ENCODE measurements at regions of chr9 and their contacts with region 1.

Region 1: GRCh38 chr9:126398403-126399058 is 71.9 kb downstream of the MVB12B start:
- DNase-seq: peak; percentile 57 to 88 (median 77)
- ATAC-seq: no peak
- H3K4me3 ChIP-seq: peak overlapping the region in 1 of 2 experiments; percentile 29
- H3K4me3 Mint-ChIP-seq: peak overlapping the region; percentile 69
- H3K27ac ChIP-seq: peak overlapping the region; percentile 38 to 64
- H3K27ac Mint-ChIP-seq: peak overlapping the region; percentile 86
- H3K4me1 ChIP-seq: peaks cover 44% of the 10 kb centered on the region
- H3K4me1 Mint-ChIP-seq: peaks cover 54% of the 10 kb centered on the region
- H3K27me3 ChIP-seq: no peaks in the 10 kb centered on the region
- H3K27me3 Mint-ChIP-seq: no peaks in the 10 kb centered on the region
- CTCF ChIP-seq: peak; percentile 99

Region 2: GRCh38 chr9:125407974-125408900 is 990.3 kb before region 1 on chr9:
- CTCF ChIA-PET with region 1: no interaction called
- POLR2A ChIA-PET with region 1: no interaction called
- intact Hi-C with region 1: loop called (anchors 2 to 5 kb)
- DNase-seq: peak; percentile 60 to 86 (median 78)
- ATAC-seq: peak; percentile 82
- H3K4me3 ChIP-seq: peak overlapping the region; percentile 29 to 58
- H3K4me3 Mint-ChIP-seq: peak overlapping the region; percentile 70
- H3K27ac ChIP-seq: no peak overlapping the region
- H3K27ac Mint-ChIP-seq: no peak overlapping the region
- H3K4me1 ChIP-seq: peaks cover 6% of the 10 kb centered on the region
- H3K4me1 Mint-ChIP-seq: peaks cover 10% of the 10 kb centered on the region
- H3K27me3 ChIP-seq: peaks cover 8 to 20% of the 10 kb centered on the region in 2 experiments
- H3K27me3 Mint-ChIP-seq: peaks cover 27% of the 10 kb centered on the region
- CTCF ChIP-seq: peak; percentile 84

Region 3: DNA sequence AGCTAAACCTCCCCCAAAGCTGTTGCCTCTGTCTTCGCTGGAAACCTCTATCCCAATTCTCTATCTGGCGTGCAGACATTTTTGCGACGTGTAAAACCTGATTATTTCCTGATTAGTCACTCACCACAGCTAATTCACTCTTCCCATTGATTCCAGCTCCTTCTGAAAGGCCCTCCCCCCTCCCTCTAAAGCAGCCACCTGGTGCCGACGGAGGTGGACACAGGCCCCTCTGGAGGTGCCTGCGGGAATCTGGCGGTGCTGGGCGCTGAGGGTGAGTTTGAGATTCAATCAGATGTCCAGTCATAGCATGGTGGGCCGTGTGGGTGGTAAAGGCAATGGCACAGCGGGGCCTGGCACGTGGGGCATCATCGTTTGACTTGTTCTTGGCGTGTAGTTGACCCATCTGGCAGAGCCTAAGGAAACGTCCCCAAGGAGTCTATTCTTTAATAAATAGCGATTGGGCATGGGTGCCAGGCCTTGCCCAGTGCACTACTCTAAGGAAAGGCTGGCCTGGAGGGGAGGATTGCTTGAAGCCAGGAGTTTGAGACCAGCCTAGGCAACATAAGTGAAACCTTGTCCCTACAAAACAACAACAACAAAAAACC is 343.0 kb before region 1 on chr9:
- CTCF ChIA-PET with region 1: no interaction called
- POLR2A ChIA-PET with region 1: no interaction called
- intact Hi-C with region 1: no loop called
- DNase-seq: no peak
- ATAC-seq: no peak
- H3K4me3 ChIP-seq: no peak overlapping the region
- H3K4me3 Mint-ChIP-seq: no peak overlapping the region
- H3K27ac ChIP-seq: no peak overlapping the region
- H3K27ac Mint-ChIP-seq: no peak overlapping the region
- H3K4me1 ChIP-seq: no peaks in the 10 kb centered on the region
- H3K4me1 Mint-ChIP-seq: no peaks in the 10 kb centered on the region
- H3K27me3 ChIP-seq: no peaks in the 10 kb centered on the region
- H3K27me3 Mint-ChIP-seq: peaks cover 17% of the 10 kb centered on the region
- CTCF ChIP-seq: no peak

Region 4: GRCh38 chr9:126317513-126317912 is 81.0 kb before region 1 on chr9:
- CTCF ChIA-PET with region 1: interaction called, 182 read pairs
- POLR2A ChIA-PET with region 1: interaction called, 14 read pairs
- intact Hi-C with region 1: loop called (anchors 1 kb)
- DNase-seq: peak; percentile 30 to 78 (median 62)
- ATAC-seq: peak; percentile 92
- H3K4me3 ChIP-seq: no peak overlapping the region
- H3K4me3 Mint-ChIP-seq: no peak overlapping the region
- H3K27ac ChIP-seq: no peak overlapping the region
- H3K27ac Mint-ChIP-seq: no peak overlapping the region
- H3K4me1 ChIP-seq: peaks cover 3% of the 10 kb centered on the region
- H3K4me1 Mint-ChIP-seq: peaks cover 14% of the 10 kb centered on the region
- H3K27me3 ChIP-seq: no peaks in the 10 kb centered on the region
- H3K27me3 Mint-ChIP-seq: no peaks in the 10 kb centered on the region
- CTCF ChIP-seq: peak; percentile 71

Region 5: DNA sequence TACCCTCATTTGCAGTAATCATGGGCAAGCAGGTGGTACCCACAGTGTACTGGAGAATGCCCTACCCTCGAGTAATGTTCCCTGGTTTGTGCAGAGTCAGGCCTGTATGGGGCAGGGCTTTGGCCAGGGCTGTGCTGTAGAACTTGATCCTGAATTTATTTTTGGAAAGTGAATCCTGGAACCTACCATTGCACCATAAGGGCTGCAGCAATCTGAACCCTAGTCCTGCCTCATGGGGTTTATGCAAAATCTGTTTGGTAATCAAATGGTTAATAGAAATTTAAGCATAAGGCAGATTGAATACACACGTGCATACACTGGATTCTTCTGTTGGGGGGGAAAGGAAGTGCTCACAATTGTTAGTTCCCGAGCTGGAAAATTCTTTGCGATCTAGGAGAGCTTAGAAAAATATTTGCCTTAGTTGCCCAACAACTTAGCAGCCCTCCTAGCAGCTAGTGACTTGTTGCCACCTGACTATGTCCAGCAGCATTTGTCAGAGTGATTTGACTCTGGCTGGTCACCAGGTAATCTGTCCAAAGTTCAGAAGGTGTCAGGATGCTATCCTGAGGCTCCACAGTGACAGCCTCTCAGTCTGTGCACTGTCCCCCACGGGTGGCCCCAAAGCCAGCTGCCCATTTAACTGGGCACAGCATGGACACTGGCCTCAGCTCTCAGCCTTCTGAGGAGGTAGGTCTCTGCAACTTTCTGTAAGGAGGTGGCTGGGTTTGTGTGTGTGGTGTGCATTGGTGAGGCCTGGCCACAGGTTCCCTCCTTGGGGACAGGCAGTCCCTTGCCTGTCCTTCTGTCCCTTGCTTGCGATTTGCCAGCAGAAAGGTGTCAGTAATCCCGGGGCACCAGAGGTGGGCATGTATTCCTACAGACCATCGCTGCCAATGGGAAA is 63.6 kb before region 1 on chr9:
- CTCF ChIA-PET with region 1: interaction called, 11 read pairs
- POLR2A ChIA-PET with region 1: no interaction called
- intact Hi-C with region 1: no loop called
- DNase-seq: peak in 1 of 9 experiments; percentile 34
- ATAC-seq: no peak
- H3K4me3 ChIP-seq: no peak overlapping the region
- H3K4me3 Mint-ChIP-seq: no peak overlapping the region
- H3K27ac ChIP-seq: no peak overlapping the region
- H3K27ac Mint-ChIP-seq: no peak overlapping the region
- H3K4me1 ChIP-seq: peaks cover 23% of the 10 kb centered on the region
- H3K4me1 Mint-ChIP-seq: peaks cover 67% of the 10 kb centered on the region
- H3K27me3 ChIP-seq: no peaks in the 10 kb centered on the region
- H3K27me3 Mint-ChIP-seq: no peaks in the 10 kb centered on the region
- CTCF ChIP-seq: no peak

Region 6: GRCh38 chr9:126420643-126421577 is 22.4 kb after region 1 on chr9:
- CTCF ChIA-PET with region 1: interaction called, 19 read pairs
- POLR2A ChIA-PET with region 1: interaction called, 4 read pairs
- intact Hi-C with region 1: no loop called
- DNase-seq: no peak
- ATAC-seq: no peak
- H3K4me3 ChIP-seq: no peak overlapping the region
- H3K4me3 Mint-ChIP-seq: no peak overlapping the region
- H3K27ac ChIP-seq: no peak overlapping the region
- H3K27ac Mint-ChIP-seq: no peak overlapping the region
- H3K4me1 ChIP-seq: peaks cover 21% of the 10 kb centered on the region
- H3K4me1 Mint-ChIP-seq: peaks cover 44% of the 10 kb centered on the region
- H3K27me3 ChIP-seq: no peaks in the 10 kb centered on the region
- H3K27me3 Mint-ChIP-seq: no peaks in the 10 kb centered on the region
- CTCF ChIP-seq: no peak

Region 7: DNA sequence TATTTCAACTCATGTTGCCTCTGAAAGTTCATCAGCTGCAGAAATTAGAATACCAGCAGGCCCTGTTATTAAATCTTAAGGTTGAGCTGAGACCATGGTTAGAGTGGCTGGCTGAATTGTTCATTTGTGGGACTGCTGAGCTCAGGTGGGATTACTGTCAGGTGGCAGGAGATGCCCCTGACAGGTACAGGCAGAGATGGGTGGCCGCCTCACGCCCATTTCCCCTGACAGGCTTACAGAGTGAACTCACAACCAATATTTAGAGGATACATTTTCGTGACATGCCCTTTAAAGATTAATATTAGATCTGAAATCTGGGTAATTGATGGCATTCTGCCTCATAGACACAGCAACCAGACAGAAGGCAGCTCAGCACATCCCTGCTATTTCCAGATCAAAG is 64.1 kb after region 1 on chr9:
- CTCF ChIA-PET with region 1: interaction called, 57 read pairs
- POLR2A ChIA-PET with region 1: no interaction called
- intact Hi-C with region 1: no loop called
- DNase-seq: no peak
- ATAC-seq: no peak
- H3K4me3 ChIP-seq: no peak overlapping the region
- H3K4me3 Mint-ChIP-seq: no peak overlapping the region
- H3K27ac ChIP-seq: no peak overlapping the region
- H3K27ac Mint-ChIP-seq: no peak overlapping the region
- H3K4me1 ChIP-seq: no peaks in the 10 kb centered on the region
- H3K4me1 Mint-ChIP-seq: peaks cover 24% of the 10 kb centered on the region
- H3K27me3 ChIP-seq: no peaks in the 10 kb centered on the region
- H3K27me3 Mint-ChIP-seq: no peaks in the 10 kb centered on the region
- CTCF ChIP-seq: no peak

Region 8: DNA sequence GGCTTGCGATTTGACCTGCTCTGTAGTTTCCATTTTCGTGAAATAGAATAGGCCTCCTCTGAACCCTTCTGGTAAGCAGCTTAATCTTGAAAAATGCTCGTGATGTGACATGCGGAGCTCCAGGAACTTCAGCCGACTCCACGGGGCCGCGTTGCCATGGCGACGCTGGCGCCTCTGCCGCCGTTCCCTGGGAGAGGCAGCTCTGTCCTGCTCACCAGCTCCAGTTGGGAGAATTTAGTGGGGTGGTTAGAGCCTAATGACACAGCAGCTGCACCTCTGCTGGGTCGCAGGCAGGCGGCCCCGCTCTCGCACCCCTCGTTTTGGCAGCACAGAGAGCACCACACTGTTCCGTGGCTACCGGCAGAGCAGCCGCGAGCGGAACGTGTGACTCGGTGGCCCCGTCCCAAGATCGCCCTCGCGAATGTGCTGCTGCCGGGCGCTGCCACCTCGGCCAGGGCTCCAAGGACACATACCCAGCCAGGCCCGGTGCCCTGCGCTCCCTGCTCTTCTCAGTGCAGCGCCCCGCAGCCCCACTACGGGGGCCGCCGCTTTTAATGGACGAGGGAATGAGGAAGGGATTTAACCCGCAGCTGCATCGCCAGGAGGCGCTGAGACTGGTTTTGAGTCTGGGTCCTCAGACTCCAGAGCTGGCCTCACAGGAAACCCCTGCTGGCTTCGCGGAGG is 84.0 kb after region 1 on chr9:
- CTCF ChIA-PET with region 1: interaction called, 14 read pairs
- POLR2A ChIA-PET with region 1: interaction called, 3 read pairs
- intact Hi-C with region 1: no loop called
- DNase-seq: no peak
- ATAC-seq: no peak
- H3K4me3 ChIP-seq: no peak overlapping the region
- H3K4me3 Mint-ChIP-seq: no peak overlapping the region
- H3K27ac ChIP-seq: no peak overlapping the region
- H3K27ac Mint-ChIP-seq: no peak overlapping the region
- H3K4me1 ChIP-seq: peaks cover 20% of the 10 kb centered on the region
- H3K4me1 Mint-ChIP-seq: peaks cover 30% of the 10 kb centered on the region
- H3K27me3 ChIP-seq: no peaks in the 10 kb centered on the region
- H3K27me3 Mint-ChIP-seq: no peaks in the 10 kb centered on the region
- CTCF ChIP-seq: no peak

Region 9: GRCh38 chr9:126578029-126578428 is 179.5 kb after region 1 on chr9:
- CTCF ChIA-PET with region 1: no interaction called
- POLR2A ChIA-PET with region 1: no interaction called
- intact Hi-C with region 1: no loop called
- DNase-seq: no peak
- ATAC-seq: no peak
- H3K4me3 ChIP-seq: no peak overlapping the region
- H3K4me3 Mint-ChIP-seq: no peak overlapping the region
- H3K27ac ChIP-seq: no peak overlapping the region
- H3K27ac Mint-ChIP-seq: no peak overlapping the region
- H3K4me1 ChIP-seq: no peaks in the 10 kb centered on the region
- H3K4me1 Mint-ChIP-seq: no peaks in the 10 kb centered on the region
- H3K27me3 ChIP-seq: no peaks in the 10 kb centered on the region
- H3K27me3 Mint-ChIP-seq: peaks cover 16% of the 10 kb centered on the region
- CTCF ChIP-seq: no peak

Measured in CD8-positive, alpha-beta T cell (primary cell).